Activated T-helper 1 cell treated with anti-CD3 and anti-CD28 coated beads, Interleukin-12 subunit alpha, Interleukin-12 subunit beta, Interleukin-2, Interleukin-4 antibody, amounts not matched to agents 30 ng/mL and 10 ng/mL and 1 ng/mL, durations not matched to agents 14 hours and 24 hours and 36 hours (primary cell): ENCODE measurements at regions of chr2 and their contacts with region 1.

Region 1: DNA sequence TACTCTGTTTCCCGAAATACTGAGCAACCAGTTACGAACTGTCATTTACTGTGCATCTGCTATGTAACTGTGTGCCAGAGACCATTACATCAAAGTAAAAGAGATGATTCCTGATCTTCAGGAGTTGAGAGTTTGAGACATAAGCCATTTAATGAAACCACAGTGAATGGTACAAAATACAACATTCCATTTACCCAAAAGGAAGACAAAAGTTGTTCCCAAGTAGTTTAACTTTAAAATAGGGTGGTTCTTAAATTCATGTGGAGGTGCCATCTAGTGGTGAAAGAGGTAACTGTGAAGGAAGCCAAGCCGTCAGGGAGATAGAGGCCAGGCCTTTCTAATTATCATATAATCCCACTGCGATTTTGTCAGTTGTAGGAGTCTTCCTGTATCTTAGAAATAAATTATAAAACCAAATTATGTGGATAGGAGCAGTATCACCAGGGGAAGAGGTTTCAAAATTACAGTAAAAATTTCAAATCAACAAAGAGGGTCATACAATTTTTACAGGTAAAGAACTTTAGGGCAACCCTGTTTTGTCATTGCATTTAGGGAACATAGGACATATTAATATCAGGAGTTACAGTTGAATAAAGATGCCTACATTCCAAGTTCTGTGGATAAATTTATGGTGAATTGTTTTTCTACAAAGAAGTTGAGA is 67.7 kb downstream of the EPAS1 start:
- DNase-seq: no peak
- H3K4me3 Mint-ChIP-seq: no peak overlapping the region
- H3K27ac Mint-ChIP-seq: no peak overlapping the region
- H3K4me1 Mint-ChIP-seq: peaks cover 49% of the 10 kb centered on the region
- H3K27me3 Mint-ChIP-seq: peaks cover 6% of the 10 kb centered on the region

Region 2: DNA sequence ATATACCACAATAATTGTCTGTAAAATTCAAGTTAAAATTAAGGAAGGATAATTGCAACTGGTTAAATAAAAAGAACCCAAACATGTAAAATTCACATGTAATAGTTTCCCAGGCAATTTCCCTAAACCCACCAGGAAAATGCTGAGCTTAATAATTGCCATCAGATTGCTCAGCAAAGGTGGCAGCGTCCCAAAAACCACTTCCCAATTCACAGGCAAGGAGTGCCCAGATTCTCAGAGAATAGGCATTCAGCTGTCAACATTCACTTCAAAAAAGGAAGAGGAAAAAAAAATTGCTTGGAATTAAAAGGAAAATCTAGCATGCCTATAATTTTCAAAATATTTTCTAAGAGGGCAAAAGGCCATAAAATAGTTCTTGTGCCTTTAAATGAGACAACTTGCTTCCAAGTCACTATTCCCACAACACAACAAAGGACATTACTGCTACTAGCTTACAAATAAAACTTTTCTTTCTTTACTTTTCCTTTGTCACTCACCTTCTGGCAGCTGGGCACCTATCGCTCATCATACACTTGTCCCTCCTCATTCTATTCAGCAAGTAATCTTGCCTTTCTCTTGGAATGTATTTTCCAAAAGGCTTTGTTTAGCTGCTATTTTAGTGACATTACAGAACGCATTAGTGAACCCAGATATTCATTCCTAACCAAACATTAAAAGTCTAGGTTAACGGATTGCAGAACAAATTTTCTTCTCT is 769.0 kb before region 1 on chr2:
- intact Hi-C with region 1: no loop called
- DNase-seq: no peak
- H3K4me3 Mint-ChIP-seq: no peak overlapping the region
- H3K27ac Mint-ChIP-seq: no peak overlapping the region
- H3K4me1 Mint-ChIP-seq: no peaks in the 10 kb centered on the region
- H3K27me3 Mint-ChIP-seq: no peaks in the 10 kb centered on the region

Region 3: DNA sequence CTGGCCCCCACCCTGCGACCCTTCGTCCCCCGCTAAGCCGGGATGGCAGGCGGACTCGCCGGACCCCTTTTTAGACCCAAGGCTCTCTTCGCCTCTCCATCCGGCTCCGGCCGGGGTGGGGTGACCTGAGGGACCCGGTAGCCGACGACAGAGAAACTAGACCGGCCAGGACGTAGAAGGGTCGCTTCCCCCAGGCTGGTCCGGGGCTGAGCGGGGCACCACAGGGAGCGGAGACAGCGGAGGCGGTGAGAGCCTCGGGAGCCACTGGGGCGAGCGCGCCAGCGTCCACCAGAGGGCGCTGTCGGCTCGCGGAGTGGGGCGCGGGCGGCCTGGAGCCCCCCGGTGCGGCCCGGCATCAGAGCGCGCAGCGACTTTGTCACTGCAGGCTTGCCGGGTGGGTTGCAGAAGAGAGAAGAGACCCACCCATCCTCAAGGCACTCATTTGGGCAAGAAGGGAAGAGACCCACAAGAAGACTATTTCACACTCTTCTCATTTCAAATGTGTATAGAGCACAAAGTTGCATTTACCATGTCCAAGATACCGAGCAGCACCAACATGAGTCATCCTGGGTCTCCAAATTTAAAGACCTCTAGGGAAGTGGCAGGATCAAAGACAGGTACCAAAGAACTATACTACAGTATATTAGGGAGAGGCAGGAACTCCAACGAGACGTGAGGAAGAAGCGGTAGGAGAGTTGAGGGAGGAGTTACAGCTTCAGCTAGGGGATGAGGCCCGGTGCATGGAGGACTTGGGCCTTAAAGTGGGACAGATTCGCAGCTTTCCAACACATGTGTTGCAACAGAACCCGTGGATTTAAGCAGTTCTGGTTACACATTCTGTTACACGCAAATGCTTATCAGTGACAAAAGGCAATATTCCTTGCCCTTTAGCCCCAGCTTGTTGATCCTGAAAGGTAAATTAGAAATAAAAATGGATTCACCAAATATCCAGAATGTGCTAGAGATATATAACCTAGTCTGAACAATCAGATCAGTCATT is 721.1 kb before region 1 on chr2:
- intact Hi-C with region 1: loop called (anchors 10 kb)
- DNase-seq: peak; percentile 67
- H3K4me3 Mint-ChIP-seq: peak overlapping the region; percentile 70
- H3K27ac Mint-ChIP-seq: no peak overlapping the region
- H3K4me1 Mint-ChIP-seq: peaks cover 10% of the 10 kb centered on the region
- H3K27me3 Mint-ChIP-seq: peaks cover 32% of the 10 kb centered on the region

Region 4: DNA sequence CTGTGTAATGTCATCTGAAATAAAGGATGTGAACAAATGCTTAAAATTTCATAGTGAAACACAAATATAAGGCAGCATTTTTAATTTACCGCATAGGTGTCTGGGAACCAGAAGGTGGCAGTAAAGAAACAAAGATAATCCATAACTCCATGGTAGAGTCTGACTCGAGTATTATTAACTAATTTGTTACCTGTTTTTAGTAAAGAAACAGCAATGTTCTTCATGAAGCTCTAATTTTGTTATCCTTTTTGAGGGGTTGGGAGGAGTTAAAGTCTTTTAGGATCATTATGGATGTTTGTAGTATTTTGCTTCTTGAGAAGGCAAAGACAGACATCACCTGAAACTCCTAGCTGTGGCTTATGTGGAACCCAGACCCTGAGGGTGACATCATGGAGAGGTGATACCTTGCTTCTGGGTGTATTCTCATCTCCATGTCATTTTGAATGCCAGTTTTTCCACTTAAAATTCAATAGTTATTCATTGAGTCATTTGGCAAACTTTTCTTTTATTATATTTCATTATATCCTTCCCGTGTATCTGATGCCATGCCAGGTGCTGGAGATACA is 353.9 kb before region 1 on chr2:
- intact Hi-C with region 1: loop called (anchors 1 kb)
- DNase-seq: no peak
- H3K4me3 Mint-ChIP-seq: no peak overlapping the region
- H3K27ac Mint-ChIP-seq: no peak overlapping the region
- H3K4me1 Mint-ChIP-seq: peaks cover 13% of the 10 kb centered on the region
- H3K27me3 Mint-ChIP-seq: no peaks in the 10 kb centered on the region

Region 5: DNA sequence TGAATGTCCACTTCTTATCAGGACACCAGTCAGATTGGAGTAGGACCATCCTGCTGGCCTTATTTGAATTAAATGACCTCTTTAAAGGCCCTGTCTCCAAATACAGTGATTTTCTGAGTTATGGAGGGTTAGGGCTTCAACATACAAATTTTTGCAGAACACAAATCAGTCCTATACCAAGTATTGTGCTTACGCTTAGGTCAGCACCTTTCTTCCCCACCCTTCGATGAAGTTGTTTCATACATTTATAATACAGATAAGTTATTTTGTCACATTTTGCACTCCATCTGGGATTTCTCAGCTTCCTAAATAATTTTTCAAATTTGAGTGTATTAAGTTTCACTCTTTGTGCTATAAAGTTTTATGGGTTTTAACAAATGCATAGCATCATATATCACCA is 258.2 kb before region 1 on chr2:
- intact Hi-C with region 1: no loop called
- DNase-seq: no peak
- H3K4me3 Mint-ChIP-seq: no peak overlapping the region
- H3K27ac Mint-ChIP-seq: no peak overlapping the region
- H3K4me1 Mint-ChIP-seq: no peaks in the 10 kb centered on the region
- H3K27me3 Mint-ChIP-seq: peaks cover 7% of the 10 kb centered on the region

Region 6: DNA sequence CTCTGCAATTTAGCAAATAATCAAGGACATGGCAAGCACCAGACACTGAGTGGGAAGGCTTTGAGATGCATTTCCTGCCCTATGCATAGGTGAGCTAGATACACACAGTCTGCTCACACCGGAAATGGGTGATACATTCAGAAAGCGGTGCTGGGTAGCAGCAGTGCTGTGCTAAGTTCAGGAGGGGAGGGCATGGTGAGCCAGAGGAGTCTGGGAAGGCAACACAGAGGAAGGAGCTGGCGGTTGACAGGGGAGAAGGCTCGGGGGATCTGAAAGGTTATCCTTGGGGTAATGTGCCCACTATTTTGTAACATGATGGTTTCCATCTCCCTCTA is 125.1 kb before region 1 on chr2:
- intact Hi-C with region 1: loop called (anchors 5 kb)
- DNase-seq: peak; percentile 61
- H3K4me3 Mint-ChIP-seq: peak overlapping the region; percentile 6
- H3K27ac Mint-ChIP-seq: peak overlapping the region; percentile 89
- H3K4me1 Mint-ChIP-seq: peaks cover 49% of the 10 kb centered on the region
- H3K27me3 Mint-ChIP-seq: peaks cover 3% of the 10 kb centered on the region

Region 7: DNA sequence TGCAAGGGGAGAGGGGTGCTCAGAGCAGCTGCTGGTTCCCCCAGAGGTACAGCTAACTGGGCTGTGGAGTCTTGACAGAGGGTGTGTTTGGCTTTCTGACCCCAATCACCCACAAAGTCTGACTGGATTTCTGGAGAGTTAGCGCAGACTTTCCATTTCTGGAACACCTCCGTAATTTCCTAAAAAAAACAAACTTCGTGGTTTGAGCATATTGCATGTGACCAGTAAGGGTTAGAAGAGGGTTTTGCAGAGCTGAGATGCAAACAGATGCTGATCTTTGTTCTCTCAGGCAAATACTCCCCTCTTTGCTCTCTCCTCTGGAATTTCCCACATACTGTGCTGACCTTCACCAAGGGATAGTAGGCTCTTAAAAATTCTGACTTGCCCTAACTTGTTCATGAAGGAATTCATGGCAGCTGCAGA is 69.9 kb after region 1 on chr2:
- intact Hi-C with region 1: no loop called
- DNase-seq: no peak
- H3K4me3 Mint-ChIP-seq: no peak overlapping the region
- H3K27ac Mint-ChIP-seq: no peak overlapping the region
- H3K4me1 Mint-ChIP-seq: peaks cover 13% of the 10 kb centered on the region
- H3K27me3 Mint-ChIP-seq: peaks cover 4% of the 10 kb centered on the region

Region 8: DNA sequence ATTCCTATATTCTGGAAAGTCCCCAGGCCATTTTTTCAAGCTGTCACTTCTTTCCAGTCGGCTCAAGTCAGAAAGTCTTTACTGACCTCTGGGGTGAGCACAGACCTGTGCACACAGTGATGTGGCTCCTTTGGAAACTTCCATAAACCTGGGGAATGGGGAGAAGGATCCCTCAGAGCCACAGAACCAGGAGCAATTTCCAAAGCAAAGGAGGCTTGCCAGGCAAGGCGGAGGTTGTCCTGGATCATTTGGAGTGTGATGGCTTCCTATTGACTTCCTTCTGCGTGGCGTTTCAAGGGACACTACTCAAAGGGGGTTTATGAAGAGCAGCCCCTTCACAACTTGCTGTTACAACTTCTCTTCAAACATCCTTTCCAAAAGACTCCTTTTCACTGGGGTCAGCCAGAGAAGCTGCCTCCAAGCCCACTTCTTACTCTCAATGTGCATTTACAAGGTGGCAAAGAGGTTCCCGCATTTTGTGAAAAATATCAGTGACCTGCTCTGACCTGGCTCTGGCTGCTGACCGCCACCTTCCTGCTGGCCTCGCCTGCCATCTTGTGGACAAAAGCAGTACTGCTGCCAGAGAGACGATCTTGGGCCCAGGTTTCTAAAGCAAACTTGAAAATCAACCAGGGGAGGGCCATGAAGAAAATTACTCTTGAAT is 96.2 kb after region 1 on chr2:
- intact Hi-C with region 1: loop called (anchors 2 kb)
- DNase-seq: peak; percentile 59
- H3K4me3 Mint-ChIP-seq: no peak overlapping the region
- H3K27ac Mint-ChIP-seq: no peak overlapping the region
- H3K4me1 Mint-ChIP-seq: peaks cover 9% of the 10 kb centered on the region
- H3K27me3 Mint-ChIP-seq: no peaks in the 10 kb centered on the region

Region 9: DNA sequence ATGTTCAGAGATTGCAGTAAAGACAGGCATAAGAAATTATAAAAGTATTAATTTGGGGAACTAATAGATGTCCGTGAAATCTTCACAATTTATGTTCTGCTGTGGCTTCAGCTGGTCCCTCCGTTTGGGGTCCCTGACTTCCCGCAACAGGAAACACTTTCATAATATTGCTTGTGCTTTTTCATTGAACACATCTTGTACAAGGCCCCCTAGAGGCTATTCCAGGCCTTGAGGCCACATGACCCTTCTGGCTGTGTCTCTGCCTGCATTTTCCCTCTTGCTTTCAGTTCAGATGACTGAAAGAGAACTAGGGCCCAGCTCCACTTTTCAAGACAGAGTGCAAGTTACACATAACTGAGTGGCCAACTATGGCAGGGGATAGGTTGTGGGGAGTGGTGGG is 278.6 kb after region 1 on chr2:
- intact Hi-C with region 1: no loop called
- DNase-seq: no peak
- H3K4me3 Mint-ChIP-seq: no peak overlapping the region
- H3K27ac Mint-ChIP-seq: no peak overlapping the region
- H3K4me1 Mint-ChIP-seq: peaks cover 5% of the 10 kb centered on the region
- H3K27me3 Mint-ChIP-seq: peaks cover 16% of the 10 kb centered on the region